ENCODE measurements at regions of chr11 and their contacts with region 1.

Region 1: GRCh38 chr11:64304316-64305072 is 830 bp upstream of the ESRRA start:
- DNase-seq: peak; percentile 88 to 98 (median 94)
- ATAC-seq: peak; percentile 27
- H3K4me3 ChIP-seq: peak overlapping the region; percentile 92
- H3K4me3 Mint-ChIP-seq: peak overlapping the region; percentile 98
- H3K27ac ChIP-seq: peak overlapping the region; percentile 84 to 93
- H3K27ac Mint-ChIP-seq: peak overlapping the region; percentile 96
- H3K4me1 ChIP-seq: peaks cover 55% of the 10 kb centered on the region
- H3K4me1 Mint-ChIP-seq: peaks cover 42% of the 10 kb centered on the region
- H3K27me3 ChIP-seq: peaks cover 25 to 26% of the 10 kb centered on the region in 2 experiments
- H3K27me3 Mint-ChIP-seq: peaks cover 34% of the 10 kb centered on the region
- CTCF ChIP-seq: peak; percentile 92

Region 2: DNA sequence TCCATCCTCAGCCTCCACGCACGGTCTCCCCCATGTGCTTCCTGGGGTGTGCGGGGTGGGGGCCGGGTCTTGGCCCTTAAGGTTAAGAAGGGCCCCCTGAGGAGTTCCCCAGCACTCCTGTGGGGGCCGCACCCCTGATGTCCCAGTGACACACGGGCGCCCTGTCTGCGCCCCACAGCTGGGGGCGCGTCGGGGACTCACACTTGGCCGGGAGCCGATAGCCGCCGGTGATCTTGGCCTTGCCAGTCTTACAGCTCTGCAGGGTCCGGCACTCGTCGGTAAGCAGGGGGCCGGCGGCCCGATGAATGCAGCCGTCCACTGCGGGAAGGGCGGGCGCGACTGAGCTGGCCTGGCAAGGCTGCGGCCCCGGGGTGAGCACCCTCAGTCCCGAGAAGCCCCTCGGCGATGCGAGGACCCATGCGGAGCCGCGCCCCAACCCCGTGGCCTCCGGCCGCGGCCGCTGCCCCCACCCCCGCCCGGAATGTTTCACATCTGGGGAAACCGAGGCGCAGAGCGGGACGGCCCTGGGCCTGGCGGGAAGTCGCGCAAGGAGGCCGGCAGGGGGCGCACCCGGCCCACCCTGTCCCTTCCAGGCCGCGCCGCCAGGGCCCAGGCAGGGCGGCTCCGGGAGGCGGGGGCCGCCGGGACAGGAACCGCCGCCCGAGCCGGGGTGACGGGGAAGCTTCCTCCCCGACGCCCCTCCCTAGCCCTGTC is 304.3 kb before region 1 on chr11:
- CTCF ChIA-PET with region 1: no interaction called
- POLR2A ChIA-PET with region 1: no interaction called
- intact Hi-C with region 1: loop called in 1 of 2 experiments (anchors 10 kb)
- DNase-seq: peak; percentile 53 to 91 (median 70)
- ATAC-seq: peak; percentile 76
- H3K4me3 ChIP-seq: peak overlapping the region; percentile 41
- H3K4me3 Mint-ChIP-seq: peak overlapping the region; percentile 11
- H3K27ac ChIP-seq: no peak overlapping the region
- H3K27ac Mint-ChIP-seq: no peak overlapping the region
- H3K4me1 ChIP-seq: peaks cover 28% of the 10 kb centered on the region
- H3K4me1 Mint-ChIP-seq: peaks cover 9% of the 10 kb centered on the region
- H3K27me3 ChIP-seq: peaks cover 0 to 3% of the 10 kb centered on the region in 2 experiments
- H3K27me3 Mint-ChIP-seq: no peaks in the 10 kb centered on the region
- CTCF ChIP-seq: peak; percentile 75

Region 3: GRCh38 chr11:64204464-64204989 is 100.0 kb before region 1 on chr11:
- CTCF ChIA-PET with region 1: interaction called, 123 read pairs
- POLR2A ChIA-PET with region 1: interaction called, 71 read pairs
- intact Hi-C with region 1: loop called (anchors 1 kb)
- DNase-seq: peak; percentile 77 to 95 (median 84)
- ATAC-seq: peak; percentile 63
- H3K4me3 ChIP-seq: no peak overlapping the region
- H3K4me3 Mint-ChIP-seq: peak overlapping the region; percentile 93
- H3K27ac ChIP-seq: no peak overlapping the region
- H3K27ac Mint-ChIP-seq: peak overlapping the region; percentile 78
- H3K4me1 ChIP-seq: peaks cover 50% of the 10 kb centered on the region
- H3K4me1 Mint-ChIP-seq: peaks cover 49% of the 10 kb centered on the region
- H3K27me3 ChIP-seq: no peaks in the 10 kb centered on the region
- H3K27me3 Mint-ChIP-seq: no peaks in the 10 kb centered on the region
- CTCF ChIP-seq: peak; percentile 69

Region 4: DNA sequence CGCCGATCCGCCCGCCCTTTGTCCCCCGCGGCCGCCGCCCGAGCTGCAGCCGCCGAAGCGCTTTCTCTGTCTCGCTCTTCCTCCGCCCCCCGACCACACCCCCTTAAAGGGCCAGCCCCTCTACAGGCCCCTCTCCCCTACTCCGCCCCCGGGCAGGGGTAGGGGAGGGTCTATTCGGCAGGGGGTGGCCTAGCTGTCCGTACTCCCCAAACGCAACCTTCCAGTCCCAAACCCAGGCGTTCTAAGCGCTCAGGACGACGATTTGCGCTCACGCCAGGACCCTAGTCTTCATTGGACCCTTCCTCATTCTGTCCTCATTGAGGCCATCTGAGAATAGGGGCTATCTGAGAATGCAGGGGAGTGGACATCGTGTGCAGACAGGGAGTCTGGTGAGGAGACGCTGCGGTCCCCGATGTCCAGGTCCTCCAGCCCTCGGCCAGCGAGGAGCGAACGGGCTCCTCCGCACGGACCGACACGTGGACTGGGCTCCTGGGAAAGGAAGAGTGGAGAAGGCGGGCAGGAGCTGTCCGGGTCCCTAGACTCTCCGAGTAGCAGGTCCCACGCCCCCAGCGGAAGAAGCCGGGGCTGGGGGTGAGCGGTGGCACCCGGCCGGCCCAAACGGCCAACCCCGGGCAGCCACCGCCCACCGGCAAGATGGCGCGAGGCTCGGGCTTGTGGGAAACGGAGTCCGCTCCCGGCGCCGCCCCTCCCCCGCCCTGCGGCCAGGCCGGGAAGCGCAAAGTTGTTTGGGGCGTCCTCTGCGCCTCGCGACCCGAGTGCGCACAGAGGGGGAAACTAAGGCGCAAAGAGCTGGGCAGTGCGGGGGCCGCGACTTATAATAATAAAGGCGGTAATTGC is 57.4 kb before region 1 on chr11 and contains the start of gene PPP1R14B:
- CTCF ChIA-PET with region 1: interaction called, 13 read pairs
- POLR2A ChIA-PET with region 1: interaction called, 15 read pairs
- intact Hi-C with region 1: loop called (anchors 1 to 2 kb)
- DNase-seq: peak; percentile 60 to 89 (median 76)
- ATAC-seq: peak; percentile 63
- H3K4me3 ChIP-seq: peak within 1 kb of the TSS; percentile 90
- H3K4me3 Mint-ChIP-seq: peak within 1 kb of the TSS; percentile 94
- H3K27ac ChIP-seq: peak within 1 kb of the TSS; percentile 48 to 57
- H3K27ac Mint-ChIP-seq: peak within 1 kb of the TSS; percentile 82
- H3K4me1 ChIP-seq: peaks cover 61% of the 10 kb centered on the region
- H3K4me1 Mint-ChIP-seq: peaks cover 41% of the 10 kb centered on the region
- H3K27me3 ChIP-seq: no peaks in the 10 kb centered on the region
- H3K27me3 Mint-ChIP-seq: no peaks in the 10 kb centered on the region
- CTCF ChIP-seq: no peak
- total RNA-seq, gene PPP1R14B: 17.1 to 21.0 TPM

Region 5: DNA sequence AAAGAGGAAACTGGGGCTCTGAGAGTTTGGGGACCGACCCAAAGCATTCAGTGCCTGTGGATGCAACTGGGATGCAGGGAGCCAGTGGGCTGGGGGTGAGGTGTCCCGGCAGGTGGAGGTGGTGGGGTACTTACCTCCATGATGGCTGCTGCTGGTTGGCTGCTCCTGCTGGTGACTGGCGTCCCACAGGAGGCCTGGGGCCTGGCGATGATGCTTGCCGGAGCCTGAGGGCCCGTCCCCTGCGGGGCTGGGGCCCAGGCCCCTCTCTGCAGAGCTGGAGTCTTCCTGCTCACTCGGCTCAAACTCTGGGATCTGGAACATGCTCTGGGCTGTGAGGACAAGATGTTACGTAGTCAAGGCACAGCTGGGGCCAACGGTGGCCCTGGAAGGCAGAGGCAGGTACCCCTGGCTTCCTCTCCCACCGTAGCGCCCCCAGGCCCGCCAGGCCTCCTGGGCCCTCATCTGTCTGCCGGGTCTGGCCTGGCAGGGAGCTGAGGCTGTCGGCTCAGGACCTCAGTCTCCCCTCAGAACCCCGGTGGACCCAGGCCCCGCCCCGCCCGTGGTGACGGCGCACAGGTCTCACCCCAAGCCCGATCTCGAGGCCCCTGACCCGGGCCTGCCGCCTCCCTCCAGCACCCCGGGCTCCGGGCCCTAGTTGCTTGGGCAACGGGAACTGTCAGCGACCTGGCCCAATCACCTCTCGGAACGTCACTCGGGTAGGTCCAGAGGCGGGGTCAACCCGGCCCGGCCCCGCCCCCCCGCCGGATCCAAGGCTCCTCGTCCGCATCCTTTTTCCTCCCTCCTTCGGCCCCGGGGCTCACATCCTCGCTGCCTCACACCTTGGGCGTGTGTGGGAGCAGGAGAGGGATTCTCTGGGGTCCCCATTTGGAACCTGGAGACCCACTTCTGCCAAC is 20.2 kb before region 1 on chr11 and contains the start of gene BAD:
- CTCF ChIA-PET with region 1: interaction called, 21 read pairs
- POLR2A ChIA-PET with region 1: interaction called, 18 read pairs
- intact Hi-C with region 1: loop called (anchors 1 kb)
- DNase-seq: peak; percentile 87 to 95 (median 91)
- ATAC-seq: peak; percentile 77
- H3K4me3 ChIP-seq: peak within 1 kb of the TSS; percentile 97
- H3K4me3 Mint-ChIP-seq: peak within 1 kb of the TSS; percentile 93
- H3K27ac ChIP-seq: peak within 1 kb of the TSS; percentile 99 to 100
- H3K27ac Mint-ChIP-seq: peak within 1 kb of the TSS; percentile 97
- H3K4me1 ChIP-seq: peaks cover 37% of the 10 kb centered on the region
- H3K4me1 Mint-ChIP-seq: peaks cover 21% of the 10 kb centered on the region
- H3K27me3 ChIP-seq: no peaks in the 10 kb centered on the region
- H3K27me3 Mint-ChIP-seq: no peaks in the 10 kb centered on the region
- CTCF ChIP-seq: no peak
- total RNA-seq, gene BAD: 22.5 to 23.0 TPM

Region 6: DNA sequence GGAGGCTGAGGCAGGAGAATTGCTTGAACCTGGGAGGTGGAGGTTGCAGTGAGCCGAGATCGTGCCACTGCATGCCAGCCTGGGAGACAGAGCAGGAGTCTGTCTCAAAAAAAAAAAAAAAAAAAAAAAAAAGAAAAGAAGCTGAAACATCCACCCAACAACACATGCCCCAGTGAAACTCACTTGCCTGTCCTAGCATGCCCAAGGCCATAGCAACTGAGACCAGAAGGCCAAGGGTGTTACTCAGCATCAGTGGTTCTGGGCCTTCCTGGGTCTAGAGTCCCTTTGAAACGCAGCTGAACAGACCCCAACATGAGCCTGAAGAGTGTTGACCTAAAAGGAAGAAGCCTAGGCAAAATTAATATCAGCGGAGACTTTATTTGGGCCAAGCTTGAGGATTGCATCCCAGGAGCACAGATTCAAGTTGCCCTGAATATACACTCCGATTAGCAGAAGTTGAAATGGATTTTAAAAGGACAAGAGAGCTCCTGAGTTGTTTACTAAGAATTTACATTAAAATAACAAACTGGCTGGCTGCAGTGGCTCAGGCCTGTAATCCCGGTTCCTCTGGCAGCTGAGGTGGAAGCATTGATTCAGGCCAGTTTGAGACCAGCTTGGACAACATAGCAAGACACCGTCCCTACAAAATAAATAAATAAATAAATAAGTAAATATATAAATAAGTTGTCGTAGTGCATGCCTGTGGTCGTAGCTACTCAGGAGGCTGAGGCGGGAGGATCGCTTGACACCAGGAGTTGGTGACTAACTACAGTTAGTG is 20.4 kb after region 1 on chr11:
- CTCF ChIA-PET with region 1: no interaction called
- POLR2A ChIA-PET with region 1: no interaction called
- intact Hi-C with region 1: no loop called
- DNase-seq: no peak
- ATAC-seq: no peak
- H3K4me3 ChIP-seq: no peak overlapping the region
- H3K4me3 Mint-ChIP-seq: no peak overlapping the region
- H3K27ac ChIP-seq: no peak overlapping the region
- H3K27ac Mint-ChIP-seq: no peak overlapping the region
- H3K4me1 ChIP-seq: no peaks in the 10 kb centered on the region
- H3K4me1 Mint-ChIP-seq: peaks cover 11% of the 10 kb centered on the region
- H3K27me3 ChIP-seq: no peaks in the 10 kb centered on the region
- H3K27me3 Mint-ChIP-seq: no peaks in the 10 kb centered on the region
- CTCF ChIP-seq: no peak

Region 7: DNA sequence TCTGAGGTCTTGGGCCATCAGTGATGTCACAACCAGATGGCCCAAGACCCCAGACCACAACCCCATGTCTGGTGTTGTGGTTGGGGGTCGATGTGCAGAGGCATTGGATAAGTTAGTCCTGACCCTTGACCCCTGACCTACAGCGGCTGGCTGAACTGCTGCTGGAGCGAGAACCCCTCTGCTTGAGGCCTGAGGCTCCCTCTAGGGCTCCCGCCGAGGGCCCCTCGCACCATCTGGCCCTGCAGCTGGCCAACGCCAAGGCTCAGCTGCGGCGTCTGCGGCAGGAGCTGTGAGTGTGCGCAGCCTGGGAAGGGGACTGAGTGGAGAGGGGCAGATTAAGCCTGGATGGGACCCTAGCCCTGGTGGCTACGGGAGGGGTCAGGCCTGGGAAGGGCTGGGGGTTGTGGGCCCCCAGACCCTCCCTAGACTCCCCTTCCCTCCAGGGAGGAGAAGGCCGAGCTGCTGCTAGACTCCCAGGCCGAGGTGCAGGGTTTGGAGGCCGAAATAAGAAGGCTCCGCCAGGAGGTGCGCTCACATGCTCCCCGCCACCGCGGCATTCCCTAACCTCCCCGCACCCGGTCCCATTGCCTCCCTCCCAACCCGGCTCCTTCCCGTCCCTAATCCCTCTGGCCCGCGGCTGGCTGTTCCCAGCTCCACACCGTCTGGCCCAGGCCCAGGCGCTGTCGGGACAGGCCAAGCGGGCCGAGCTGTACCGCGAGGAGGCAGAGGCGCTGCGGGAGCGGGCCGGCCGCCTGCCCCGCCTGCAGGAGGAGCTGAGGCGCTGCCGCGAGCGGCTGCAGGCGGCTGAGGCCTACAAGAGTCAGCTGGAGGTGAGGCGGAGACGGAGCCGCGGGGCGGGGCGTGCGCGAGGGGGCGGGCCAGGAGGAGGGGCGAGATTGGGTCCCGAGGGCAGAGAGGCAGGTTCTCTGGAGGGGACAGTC is 37.6 kb after region 1 on chr11:
- CTCF ChIA-PET with region 1: interaction called, 8 read pairs
- POLR2A ChIA-PET with region 1: interaction called, 8 read pairs
- intact Hi-C with region 1: loop called (anchors 1 to 5 kb)
- DNase-seq: peak; percentile 78 to 94 (median 91)
- ATAC-seq: peak; percentile 68
- H3K4me3 ChIP-seq: peak overlapping the region; percentile 7
- H3K4me3 Mint-ChIP-seq: peak overlapping the region; percentile 34
- H3K27ac ChIP-seq: peak overlapping the region in 1 of 2 donors; percentile 50
- H3K27ac Mint-ChIP-seq: no peak overlapping the region
- H3K4me1 ChIP-seq: peaks cover 55% of the 10 kb centered on the region
- H3K4me1 Mint-ChIP-seq: peaks cover 54% of the 10 kb centered on the region
- H3K27me3 ChIP-seq: no peaks in the 10 kb centered on the region
- H3K27me3 Mint-ChIP-seq: no peaks in the 10 kb centered on the region
- CTCF ChIP-seq: no peak

Region 8: GRCh38 chr11:64675450-64676260 is 371.2 kb after region 1 on chr11:
- CTCF ChIA-PET with region 1: no interaction called
- POLR2A ChIA-PET with region 1: no interaction called
- intact Hi-C with region 1: no loop called
- DNase-seq: peak in 1 of 14 experiments; percentile 21
- ATAC-seq: no peak
- H3K4me3 ChIP-seq: no peak overlapping the region
- H3K4me3 Mint-ChIP-seq: no peak overlapping the region
- H3K27ac ChIP-seq: no peak overlapping the region
- H3K27ac Mint-ChIP-seq: no peak overlapping the region
- H3K4me1 ChIP-seq: no peaks in the 10 kb centered on the region
- H3K4me1 Mint-ChIP-seq: no peaks in the 10 kb centered on the region
- H3K27me3 ChIP-seq: peaks cover 11 to 22% of the 10 kb centered on the region in 2 experiments
- H3K27me3 Mint-ChIP-seq: peaks cover 62% of the 10 kb centered on the region
- CTCF ChIP-seq: no peak

Region 9: GRCh38 chr11:64698427-64698826 is 393.9 kb after region 1 on chr11:
- CTCF ChIA-PET with region 1: no interaction called
- POLR2A ChIA-PET with region 1: no interaction called
- intact Hi-C with region 1: no loop called
- DNase-seq: no peak
- ATAC-seq: no peak
- H3K4me3 ChIP-seq: no peak overlapping the region
- H3K4me3 Mint-ChIP-seq: no peak overlapping the region
- H3K27ac ChIP-seq: no peak overlapping the region
- H3K27ac Mint-ChIP-seq: no peak overlapping the region
- H3K4me1 ChIP-seq: no peaks in the 10 kb centered on the region
- H3K4me1 Mint-ChIP-seq: no peaks in the 10 kb centered on the region
- H3K27me3 ChIP-seq: peaks cover 14 to 16% of the 10 kb centered on the region in 2 experiments
- H3K27me3 Mint-ChIP-seq: peaks cover 30% of the 10 kb centered on the region
- CTCF ChIP-seq: no peak